Naive thymus-derived CD4-positive, alpha-beta T cell (primary cell): ENCODE measurements at regions of chr12 and their contacts with region 1.

Region 1: GRCh38 chr12:98593351-98594049 is at the start of gene SLC25A3:
- DNase-seq: peak; percentile 79 to 96 (median 92)
- ATAC-seq: peak; percentile 98
- H3K4me3 ChIP-seq: peak within 1 kb of the TSS; percentile 80
- H3K4me3 Mint-ChIP-seq: peak within 1 kb of the TSS; percentile 88 to 99 (median 96)
- H3K27ac ChIP-seq: peak within 1 kb of the TSS; percentile 95
- H3K27ac Mint-ChIP-seq: peak within 1 kb of the TSS; percentile 98 to 100 (median 99)
- H3K4me1 ChIP-seq: peaks cover 17 to 22% of the 10 kb centered on the region in 2 donors
- H3K4me1 Mint-ChIP-seq: peaks cover 20 to 48% (median 36%) of the 10 kb centered on the region in 7 donors
- H3K27me3 ChIP-seq: no peaks in the 10 kb centered on the region
- H3K27me3 Mint-ChIP-seq: peaks cover 0 to 2% (median 0%) of the 10 kb centered on the region in 5 donors
- total RNA-seq, gene SLC25A3: 234 to 448 (median 353) TPM

Region 2: GRCh38 chr12:98503592-98504367 is 89.7 kb before region 1 on chr12:
- CTCF ChIA-PET with region 1: no interaction called
- POLR2A ChIA-PET with region 1: interaction called, 4 read pairs
- intact Hi-C with region 1: loop called (anchors 1 kb)
- DNase-seq: peak; percentile 89 to 95 (median 92)
- ATAC-seq: peak; percentile 94
- H3K4me3 ChIP-seq: peak overlapping the region; percentile 97
- H3K4me3 Mint-ChIP-seq: peak overlapping the region; percentile 89 to 99 (median 94)
- H3K27ac ChIP-seq: peak overlapping the region; percentile 90
- H3K27ac Mint-ChIP-seq: peak overlapping the region; percentile 95 to 100 (median 100)
- H3K4me1 ChIP-seq: peaks cover 0 to 11% of the 10 kb centered on the region in 2 donors
- H3K4me1 Mint-ChIP-seq: peaks cover 6 to 30% (median 23%) of the 10 kb centered on the region in 7 donors
- H3K27me3 ChIP-seq: no peaks in the 10 kb centered on the region
- H3K27me3 Mint-ChIP-seq: peaks cover 0 to 18% (median 3%) of the 10 kb centered on the region in 5 donors

Region 3: DNA sequence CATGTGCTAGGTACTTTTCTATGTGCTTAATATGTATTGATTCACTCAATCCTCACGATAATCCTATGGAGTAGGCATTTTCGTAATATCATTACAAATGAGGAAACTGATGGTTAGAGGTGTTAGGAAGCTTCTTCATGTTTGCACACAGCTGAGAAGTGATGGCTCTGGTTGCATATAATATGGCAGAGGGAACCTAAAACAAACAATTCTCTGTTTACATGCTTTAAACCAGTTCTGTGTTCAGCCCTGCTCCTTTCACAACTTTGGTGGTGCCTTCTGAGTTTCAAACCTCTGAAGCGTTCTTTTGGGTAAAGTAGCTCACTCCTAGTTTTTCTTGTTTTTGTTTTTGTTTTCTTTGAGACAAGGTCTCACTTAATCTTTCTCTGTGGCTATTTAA is 42.7 kb before region 1 on chr12:
- CTCF ChIA-PET with region 1: no interaction called
- POLR2A ChIA-PET with region 1: no interaction called
- intact Hi-C with region 1: no loop called
- DNase-seq: no peak
- ATAC-seq: no peak
- H3K4me3 ChIP-seq: no peak overlapping the region
- H3K4me3 Mint-ChIP-seq: no peak overlapping the region
- H3K27ac ChIP-seq: no peak overlapping the region
- H3K27ac Mint-ChIP-seq: no peak overlapping the region
- H3K4me1 ChIP-seq: no peaks in the 10 kb centered on the region
- H3K4me1 Mint-ChIP-seq: peaks cover 0 to 3% (median 0%) of the 10 kb centered on the region in 7 donors
- H3K27me3 ChIP-seq: no peaks in the 10 kb centered on the region
- H3K27me3 Mint-ChIP-seq: no peaks in the 10 kb centered on the region

Region 4: DNA sequence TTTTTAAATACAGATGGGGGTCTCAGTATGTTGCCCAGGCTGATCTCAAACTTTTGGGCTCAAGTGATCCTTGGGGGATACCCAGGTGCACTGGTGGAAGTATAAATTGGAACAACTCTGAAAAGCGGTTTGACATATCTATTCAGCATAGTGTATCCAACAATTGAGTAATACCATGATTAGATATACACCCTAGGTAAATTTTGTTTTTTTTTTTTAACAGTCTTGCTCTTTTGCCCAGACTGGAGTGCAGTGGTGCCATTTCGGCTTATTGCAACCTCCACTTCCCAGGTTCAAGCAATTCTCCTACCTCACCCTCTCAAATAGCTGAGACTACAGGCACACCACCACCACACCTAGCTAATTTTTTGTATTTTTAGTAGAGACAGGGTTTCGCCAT is 31.7 kb before region 1 on chr12:
- CTCF ChIA-PET with region 1: interaction called, 12 read pairs
- POLR2A ChIA-PET with region 1: interaction called, 10 read pairs
- intact Hi-C with region 1: loop called (anchors 1 kb)
- DNase-seq: no peak
- ATAC-seq: no peak
- H3K4me3 ChIP-seq: no peak overlapping the region
- H3K4me3 Mint-ChIP-seq: no peak overlapping the region
- H3K27ac ChIP-seq: no peak overlapping the region
- H3K27ac Mint-ChIP-seq: no peak overlapping the region
- H3K4me1 ChIP-seq: no peaks in the 10 kb centered on the region
- H3K4me1 Mint-ChIP-seq: peaks cover 0 to 5% (median 3%) of the 10 kb centered on the region in 7 donors
- H3K27me3 ChIP-seq: no peaks in the 10 kb centered on the region
- H3K27me3 Mint-ChIP-seq: no peaks in the 10 kb centered on the region

Region 5: DNA sequence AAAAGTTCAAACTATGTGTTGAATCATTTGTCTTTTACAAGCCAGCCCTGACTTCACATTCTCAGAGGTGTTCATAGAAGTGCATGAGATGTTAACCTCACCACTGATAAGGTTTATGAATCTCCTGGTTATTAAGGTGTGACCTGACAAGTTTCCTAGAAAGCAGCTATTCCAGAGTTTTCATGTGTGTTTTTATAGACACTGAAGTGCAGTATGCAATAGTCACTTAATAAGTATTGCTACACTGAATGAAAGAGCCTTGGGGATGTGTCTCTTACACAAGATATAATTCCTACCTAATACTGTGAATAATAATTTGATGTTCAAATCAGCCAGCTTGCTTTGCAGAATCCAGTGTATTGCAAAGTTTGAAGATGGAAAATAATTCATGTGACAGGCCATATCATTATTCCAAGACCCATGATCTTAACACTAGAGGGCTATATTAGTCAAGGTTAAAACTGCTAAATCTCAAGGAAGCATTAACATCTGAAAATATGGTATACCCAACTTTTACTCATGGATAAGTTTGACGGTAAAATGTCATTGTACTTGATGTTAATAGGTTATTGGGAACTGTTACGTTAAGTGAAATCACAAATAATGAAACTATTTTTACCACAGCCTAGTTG is 13.0 kb after region 1 on chr12:
- CTCF ChIA-PET with region 1: no interaction called
- POLR2A ChIA-PET with region 1: interaction called, 55 read pairs
- intact Hi-C with region 1: loop called in 1 of 2 experiments (anchors 1 kb)
- DNase-seq: no peak
- ATAC-seq: no peak
- H3K4me3 ChIP-seq: no peak overlapping the region
- H3K4me3 Mint-ChIP-seq: peak overlapping the region in 6 of 10 donors; percentile 16 to 83 (median 72)
- H3K27ac ChIP-seq: no peak overlapping the region
- H3K27ac Mint-ChIP-seq: peak overlapping the region in 3 of 9 donors; percentile 66 to 70 (median 67)
- H3K4me1 ChIP-seq: no peaks in the 10 kb centered on the region
- H3K4me1 Mint-ChIP-seq: peaks cover 0 to 15% (median 8%) of the 10 kb centered on the region in 7 donors
- H3K27me3 ChIP-seq: no peaks in the 10 kb centered on the region
- H3K27me3 Mint-ChIP-seq: no peaks in the 10 kb centered on the region

Region 6: DNA sequence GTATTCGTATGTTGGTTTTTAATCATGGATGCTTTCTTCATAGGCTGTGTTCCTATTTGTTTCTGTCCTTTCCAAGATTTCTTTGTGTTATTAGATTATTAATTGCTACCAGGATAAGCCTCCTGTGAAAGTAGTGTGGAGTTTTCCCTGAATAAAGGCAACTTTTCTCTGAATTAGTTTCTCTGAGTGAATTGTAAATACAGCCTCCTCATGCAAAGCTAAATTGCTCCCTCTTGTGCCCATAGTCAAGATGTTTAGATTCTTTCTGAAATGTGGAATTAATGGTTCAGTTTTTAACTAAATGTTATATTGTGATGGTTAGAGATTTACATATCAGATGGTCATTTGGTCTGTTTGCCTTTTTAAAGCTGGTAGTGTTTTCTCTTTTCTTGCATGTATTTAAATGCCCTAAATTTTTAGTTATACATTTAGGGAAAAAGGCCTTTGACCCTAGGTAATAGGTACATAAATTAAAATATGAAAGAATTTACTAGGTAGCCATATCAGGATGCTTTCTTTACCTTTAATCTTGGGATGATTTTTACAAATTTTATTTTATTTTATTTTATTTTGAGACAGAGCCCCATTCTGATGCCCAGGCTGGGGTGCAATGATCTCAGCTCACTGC is 60.5 kb after region 1 on chr12:
- CTCF ChIA-PET with region 1: interaction called, 9 read pairs
- POLR2A ChIA-PET with region 1: interaction called, 7 read pairs
- intact Hi-C with region 1: loop called in 1 of 2 experiments (anchors 1 kb)
- DNase-seq: peak in 7 of 9 donors; percentile 32 to 69 (median 51)
- ATAC-seq: peak; percentile 64
- H3K4me3 ChIP-seq: no peak overlapping the region
- H3K4me3 Mint-ChIP-seq: no peak overlapping the region
- H3K27ac ChIP-seq: no peak overlapping the region
- H3K27ac Mint-ChIP-seq: peak overlapping the region in 1 of 9 donors; percentile 70
- H3K4me1 ChIP-seq: no peaks in the 10 kb centered on the region
- H3K4me1 Mint-ChIP-seq: peaks cover 4 to 18% (median 12%) of the 10 kb centered on the region in 7 donors
- H3K27me3 ChIP-seq: no peaks in the 10 kb centered on the region
- H3K27me3 Mint-ChIP-seq: no peaks in the 10 kb centered on the region

Region 7: DNA sequence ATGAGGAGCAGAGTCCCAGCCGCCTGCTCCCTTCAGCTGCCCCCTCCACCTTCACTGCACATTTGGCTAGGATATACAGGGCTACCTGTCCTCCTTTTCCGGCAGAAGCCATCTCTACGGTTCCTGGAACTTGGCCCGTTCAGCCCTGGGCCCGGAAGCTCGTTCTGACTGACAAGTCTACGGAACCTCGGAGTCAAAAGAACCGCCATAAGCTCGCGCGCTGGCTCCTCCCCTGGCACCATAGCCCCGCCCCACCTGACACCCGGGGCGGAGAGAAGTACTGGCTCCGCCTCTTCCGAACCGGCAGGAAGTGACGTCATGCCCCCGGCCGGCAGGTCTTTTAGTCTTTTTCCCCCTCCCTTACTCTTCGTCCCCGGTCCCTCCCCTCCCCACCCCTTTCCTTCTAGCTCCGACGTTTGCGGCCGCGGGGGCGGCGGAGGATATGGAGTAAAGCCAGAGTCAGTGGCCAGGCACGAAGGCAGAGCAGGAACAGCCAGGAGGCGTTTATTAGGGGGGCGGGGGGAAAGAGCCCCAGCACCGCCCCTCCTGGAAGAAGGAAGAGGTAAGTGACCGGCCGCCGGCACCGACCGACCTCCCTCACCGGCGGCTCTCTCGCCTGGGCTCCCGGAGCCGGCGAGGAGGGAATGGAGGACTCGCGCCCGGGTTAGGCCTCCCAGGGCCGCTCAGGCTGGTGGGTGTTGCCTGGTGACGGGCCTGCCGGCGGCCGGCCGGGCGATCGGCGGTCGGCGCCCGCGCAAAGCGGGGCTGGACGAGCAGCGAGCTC is 1673.5 kb after region 1 on chr12 and contains the starts of genes DEPDC4 and SCYL2:
- CTCF ChIA-PET with region 1: no interaction called
- POLR2A ChIA-PET with region 1: no interaction called
- intact Hi-C with region 1: loop called in 1 of 2 experiments (anchors 2 kb)
- DNase-seq: peak; percentile 94 to 99 (median 97)
- ATAC-seq: peak; percentile 95
- H3K4me3 ChIP-seq: peak within 1 kb of the TSS; percentile 98
- H3K4me3 Mint-ChIP-seq: peak within 1 kb of the TSS; percentile 94 to 100 (median 98)
- H3K27ac ChIP-seq: peak within 1 kb of the TSS; percentile 96
- H3K27ac Mint-ChIP-seq: peak within 1 kb of the TSS; percentile 89 to 100 (median 98)
- H3K4me1 ChIP-seq: peaks cover 11 to 19% of the 10 kb centered on the region in 2 donors
- H3K4me1 Mint-ChIP-seq: peaks cover 18 to 54% (median 33%) of the 10 kb centered on the region in 7 donors
- H3K27me3 ChIP-seq: no peaks in the 10 kb centered on the region
- H3K27me3 Mint-ChIP-seq: no peaks in the 10 kb centered on the region
- total RNA-seq, gene DEPDC4: 0.74 to 1.3 (median 0.92) TPM
- total RNA-seq, gene SCYL2: 32.6 to 49.4 (median 42.3) TPM